Activated CD8-positive, alpha-beta memory T cell treated with anti-CD3 and anti-CD28 coated beads, Interleukin-2, amount 10 ng/mL, durations not matched to agents 7 days and 5 days (primary cell): ENCODE measurements at regions of chr1 and their contacts with region 1.

Region 1: DNA sequence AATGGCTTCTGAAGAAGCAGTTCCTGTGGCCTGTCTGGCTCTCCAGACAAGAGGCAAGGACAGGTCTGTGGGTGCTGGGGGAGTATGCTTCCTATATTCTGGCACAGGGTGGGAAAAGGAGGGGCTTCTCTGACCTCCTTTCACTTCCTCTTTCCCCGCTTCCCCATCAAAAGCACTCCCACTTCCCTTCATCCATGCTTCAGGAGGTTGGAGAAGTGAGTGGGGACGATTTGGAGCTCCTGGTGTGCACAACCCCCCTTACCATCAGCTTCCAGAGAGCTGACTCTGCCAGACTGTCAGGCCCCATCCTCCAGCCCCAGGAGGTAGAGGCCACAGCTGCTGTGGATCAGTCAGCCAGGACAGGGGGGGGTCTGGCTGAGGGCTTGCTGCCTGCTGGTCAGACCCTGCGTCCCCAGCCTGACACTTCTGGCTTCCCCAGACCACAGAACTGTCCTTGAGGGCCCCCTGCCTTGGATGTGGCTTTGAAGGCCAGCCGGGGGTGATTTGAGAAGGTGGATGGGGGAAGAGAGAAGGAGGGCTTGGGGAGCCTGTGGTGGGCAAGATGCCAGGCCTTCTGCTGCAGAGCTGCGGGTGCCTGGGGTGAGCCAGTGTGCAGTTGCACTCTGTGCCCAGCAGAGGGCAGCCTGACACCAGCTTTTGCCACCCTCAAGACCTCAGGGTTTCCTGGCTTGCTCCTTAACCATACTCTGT is 21.5 kb upstream of the TMEM222 start:
- DNase-seq: peak; percentile 76
- ATAC-seq: peak; percentile 87
- H3K4me3 Mint-ChIP-seq: no peak overlapping the region
- H3K27ac Mint-ChIP-seq: no peak overlapping the region
- H3K4me1 Mint-ChIP-seq: peaks cover 6% of the 10 kb centered on the region
- H3K27me3 Mint-ChIP-seq: no peaks in the 10 kb centered on the region

Region 2: DNA sequence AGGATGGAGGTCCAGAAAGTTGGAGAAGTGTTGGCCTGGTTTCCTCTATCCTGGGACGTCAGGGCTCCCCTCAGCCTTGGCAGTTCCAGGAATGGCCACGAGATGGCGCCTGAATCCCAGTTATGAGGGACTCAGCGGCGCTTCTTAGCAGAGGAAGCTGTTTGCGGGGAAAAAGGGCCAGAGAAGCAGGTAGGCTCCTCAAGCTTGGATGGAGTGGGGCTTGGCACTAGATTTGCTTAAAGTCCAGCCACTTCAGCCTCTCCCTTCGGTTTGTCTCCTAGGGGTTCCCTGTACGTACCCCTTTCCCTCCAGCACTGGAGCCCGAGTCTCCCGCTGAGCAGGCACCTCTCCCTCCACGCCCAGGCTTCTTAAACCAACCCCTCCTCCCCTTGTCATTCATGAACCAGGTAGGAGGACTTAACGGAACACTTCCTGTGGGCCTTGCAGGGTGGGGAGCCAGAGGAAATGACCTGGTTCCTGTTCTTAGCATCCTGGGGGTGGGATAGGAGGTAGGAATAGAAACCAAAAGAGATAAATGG is 255.8 kb before region 1 on chr1:
- CTCF ChIA-PET with region 1: interaction called, 18 read pairs
- DNase-seq: peak; percentile 93
- ATAC-seq: peak; percentile 89
- H3K4me3 Mint-ChIP-seq: peak overlapping the region; percentile 75
- H3K27ac Mint-ChIP-seq: peak overlapping the region; percentile 73
- H3K4me1 Mint-ChIP-seq: peaks cover 22% of the 10 kb centered on the region
- H3K27me3 Mint-ChIP-seq: peaks cover 3% of the 10 kb centered on the region

Region 3: GRCh38 chr1:27111626-27112573 is 188.6 kb before region 1 on chr1:
- CTCF ChIA-PET with region 1: interaction called, 15 read pairs
- DNase-seq: peak; percentile 87
- ATAC-seq: peak; percentile 99
- H3K4me3 Mint-ChIP-seq: no peak overlapping the region
- H3K27ac Mint-ChIP-seq: peak overlapping the region; percentile 83
- H3K4me1 Mint-ChIP-seq: peaks cover 47% of the 10 kb centered on the region
- H3K27me3 Mint-ChIP-seq: no peaks in the 10 kb centered on the region

Region 4: DNA sequence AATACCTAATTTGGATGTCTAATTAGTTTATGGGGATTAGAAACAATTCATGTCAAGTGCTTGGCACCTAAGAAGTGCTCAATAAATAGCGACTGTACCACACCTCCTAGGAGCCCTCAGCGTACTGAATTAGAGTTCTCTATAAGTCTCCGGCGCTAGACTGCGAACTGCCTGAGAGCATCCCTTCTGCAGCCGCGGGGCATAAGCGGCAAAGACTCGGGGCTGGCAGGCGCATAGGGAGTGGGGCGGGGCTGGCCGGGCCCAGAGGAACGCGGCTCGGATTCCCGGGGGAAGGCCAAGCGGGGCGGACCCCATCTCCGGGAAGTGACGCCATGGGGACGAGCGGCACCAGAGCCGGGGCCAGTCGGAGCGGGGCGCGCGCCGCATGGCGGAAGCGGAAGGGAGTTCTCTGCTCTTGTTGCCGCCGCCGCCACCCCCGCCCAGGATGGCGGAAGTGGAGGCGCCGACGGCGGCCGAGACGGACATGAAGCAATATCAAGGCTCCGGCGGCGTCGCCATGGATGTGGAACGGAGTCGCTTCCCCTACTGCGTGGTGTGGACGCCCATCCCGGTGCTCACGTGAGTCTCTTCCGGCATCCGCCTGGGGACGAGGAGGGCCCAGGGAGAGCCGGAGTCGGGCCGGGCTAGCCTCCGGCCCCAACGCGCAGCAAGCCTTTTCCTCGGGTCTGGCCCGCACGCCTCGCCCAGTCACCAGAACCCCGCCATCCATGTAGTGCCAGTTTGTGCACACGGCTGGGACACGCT is 21.5 kb after region 1 on chr1 and contains the start of gene TMEM222:
- CTCF ChIA-PET with region 1: interaction called, 20 read pairs
- DNase-seq: peak; percentile 98
- ATAC-seq: peak; percentile 98
- H3K4me3 Mint-ChIP-seq: peak within 1 kb of the TSS; percentile 92
- H3K27ac Mint-ChIP-seq: peak within 1 kb of the TSS; percentile 96
- H3K4me1 Mint-ChIP-seq: peaks cover 43% of the 10 kb centered on the region
- H3K27me3 Mint-ChIP-seq: peaks cover 2% of the 10 kb centered on the region
- total RNA-seq, gene TMEM222: 31.0 to 44.2 TPM

Region 5: DNA sequence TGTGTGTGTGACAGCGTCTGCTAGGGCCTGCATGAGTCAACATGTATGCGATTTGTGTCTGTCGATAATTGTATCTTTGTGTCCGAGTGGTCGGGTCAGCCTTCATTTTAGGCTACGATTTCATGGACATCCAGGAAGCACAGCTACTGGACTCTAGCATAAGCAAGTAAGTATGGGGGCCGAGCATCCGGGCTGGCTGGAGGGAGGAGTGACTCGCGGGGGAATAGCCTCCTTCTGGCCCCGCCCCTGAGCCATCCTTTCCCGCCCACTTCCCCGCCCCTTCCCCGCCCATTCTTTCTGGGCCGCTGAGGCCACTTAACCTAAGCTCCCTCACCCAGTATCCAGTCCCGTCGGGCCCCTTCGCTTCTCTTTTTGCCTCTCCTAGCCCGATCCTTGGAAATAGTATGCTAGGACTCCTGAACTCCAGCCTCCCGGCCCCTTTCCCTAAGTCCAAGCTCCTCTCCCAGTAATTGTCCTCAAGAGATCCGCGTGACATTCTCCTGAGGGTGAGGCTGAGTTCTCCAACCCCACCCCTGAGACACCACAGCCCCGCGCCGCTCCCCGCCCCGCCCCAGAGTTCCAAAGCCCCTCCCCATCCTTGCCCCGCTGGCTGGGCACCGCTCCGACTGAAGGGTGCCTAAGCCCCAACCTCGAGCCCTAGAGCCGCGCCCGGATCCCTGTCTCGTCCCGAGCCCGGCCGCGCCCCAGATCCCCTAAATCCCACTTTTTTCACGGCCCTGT is 65.0 kb after region 1 on chr1:
- CTCF ChIA-PET with region 1: interaction called, 29 read pairs
- DNase-seq: peak; percentile 89
- ATAC-seq: peak; percentile 69
- H3K4me3 Mint-ChIP-seq: peak overlapping the region; percentile 78
- H3K27ac Mint-ChIP-seq: peak overlapping the region; percentile 79
- H3K4me1 Mint-ChIP-seq: peaks cover 27% of the 10 kb centered on the region
- H3K27me3 Mint-ChIP-seq: peaks cover 7% of the 10 kb centered on the region

Region 6: DNA sequence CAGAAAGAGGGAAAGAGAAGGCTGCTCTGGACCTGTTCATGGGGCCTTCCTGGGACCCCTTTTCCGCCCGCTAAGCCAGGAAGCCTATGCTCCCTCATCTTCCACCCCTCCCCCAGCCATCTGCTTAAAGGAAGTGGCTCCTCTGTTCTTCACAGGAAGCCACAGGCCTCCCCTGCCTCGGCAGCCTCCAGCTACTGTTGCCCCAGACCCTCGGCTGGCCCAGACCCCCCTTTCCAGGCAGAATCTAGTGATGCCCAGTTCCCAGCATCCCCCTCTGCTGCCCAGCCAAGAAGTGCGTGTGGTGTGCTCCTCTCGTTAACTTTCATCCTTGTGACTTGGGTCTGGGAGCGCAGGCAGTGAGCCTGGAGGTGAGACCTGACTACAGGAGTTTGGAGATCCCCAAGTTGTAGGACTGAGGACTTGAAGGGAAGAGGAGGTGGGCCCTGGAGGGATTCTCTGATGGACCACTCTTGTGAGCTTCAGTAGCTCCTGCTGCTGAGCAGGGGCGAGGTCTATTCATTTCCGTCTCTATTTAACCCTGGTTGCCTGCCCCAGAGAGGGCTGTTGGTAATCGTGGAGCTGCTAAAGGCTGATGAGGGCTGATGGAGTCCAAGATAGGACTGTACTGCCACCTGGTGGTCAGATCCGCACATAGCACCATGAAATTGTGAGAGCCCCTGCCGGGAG is 362.4 kb after region 1 on chr1:
- CTCF ChIA-PET with region 1: interaction called, 11 read pairs
- DNase-seq: peak; percentile 93
- ATAC-seq: peak; percentile 80
- H3K4me3 Mint-ChIP-seq: peak overlapping the region; percentile 68
- H3K27ac Mint-ChIP-seq: peak overlapping the region; percentile 100
- H3K4me1 Mint-ChIP-seq: peaks cover 72% of the 10 kb centered on the region
- H3K27me3 Mint-ChIP-seq: no peaks in the 10 kb centered on the region